AG04449 (cell line): ENCODE measurements at regions of chr1 and their contacts with region 1.

Region 1: DNA sequence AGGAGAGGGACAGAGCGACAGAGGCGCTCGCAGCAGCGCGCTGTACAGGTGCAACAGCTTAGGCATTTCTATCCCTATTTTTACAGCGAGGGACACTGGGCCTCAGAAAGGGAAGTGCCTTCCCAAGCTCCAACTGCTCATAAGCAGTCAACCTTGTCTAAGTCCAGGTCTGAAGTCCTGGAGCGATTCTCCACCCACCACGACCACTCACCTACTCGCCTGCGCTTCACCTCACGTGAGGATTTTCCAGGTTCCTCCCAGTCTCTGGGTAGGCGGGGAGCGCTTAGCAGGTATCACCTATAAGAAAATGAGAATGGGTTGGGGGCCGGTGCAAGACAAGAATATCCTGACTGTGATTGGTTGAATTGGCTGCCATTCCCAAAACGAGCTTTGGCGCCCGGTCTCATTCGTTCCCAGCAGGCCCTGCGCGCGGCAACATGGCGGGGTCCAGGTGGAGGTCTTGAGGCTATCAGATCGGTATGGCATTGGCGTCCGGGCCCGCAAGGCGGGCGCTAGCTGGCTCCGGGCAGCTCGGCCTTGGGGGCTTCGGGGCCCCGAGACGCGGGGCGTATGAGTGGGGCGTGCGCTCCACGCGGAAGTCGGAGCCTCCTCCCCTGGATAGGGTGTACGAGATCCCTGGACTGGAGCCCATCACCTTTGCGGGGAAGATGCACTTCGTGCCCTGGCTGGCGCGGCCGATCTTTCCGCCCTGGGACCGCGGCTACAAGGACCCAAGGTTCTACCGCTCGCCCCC is at the starts of genes CYB5RL and MRPL37:
- DNase-seq: peak; percentile 78
- H3K4me3 ChIP-seq: peak within 1 kb of the TSS; percentile 95
- CTCF ChIP-seq: no peak

Region 2: DNA sequence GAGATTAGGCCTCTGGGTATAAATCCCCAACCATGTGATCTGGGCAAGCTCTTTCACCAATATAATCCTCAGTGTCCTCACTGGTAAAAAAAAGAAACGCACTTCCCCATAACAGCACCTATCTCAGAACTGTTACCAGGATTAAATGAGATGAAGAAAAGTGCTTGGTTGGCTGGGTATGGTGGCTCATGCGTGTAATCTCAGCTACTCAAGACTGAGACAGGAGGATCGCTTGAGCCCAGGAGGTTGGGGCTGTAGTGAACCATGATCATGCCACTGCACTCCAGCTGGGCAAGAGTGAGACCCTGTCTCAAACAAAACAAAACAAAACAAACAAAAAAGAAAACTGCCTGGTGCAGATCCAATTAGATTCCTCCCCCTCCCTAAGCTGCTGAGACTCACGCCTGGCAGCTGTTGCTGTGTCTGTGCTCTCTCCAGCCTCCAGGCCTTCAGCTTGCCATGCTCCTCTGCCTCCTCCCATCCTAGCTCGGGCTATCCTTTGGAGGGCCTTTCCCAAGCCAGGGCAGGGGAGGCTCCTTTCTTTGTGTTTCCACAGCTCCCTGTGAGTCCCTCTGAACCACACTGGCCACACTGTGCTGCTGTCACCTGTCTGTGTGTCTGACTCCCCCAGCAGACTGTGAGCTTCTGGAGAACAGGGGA is 19.1 kb before region 1 on chr1:
- CTCF ChIA-PET with region 1: interaction called, 12 read pairs
- POLR2A ChIA-PET with region 1: no interaction called
- DNase-seq: no peak
- H3K4me3 ChIP-seq: no peak overlapping the region
- CTCF ChIP-seq: no peak